ENCODE measurements at regions of chr15 and their contacts with region 1.

Region 1: DNA sequence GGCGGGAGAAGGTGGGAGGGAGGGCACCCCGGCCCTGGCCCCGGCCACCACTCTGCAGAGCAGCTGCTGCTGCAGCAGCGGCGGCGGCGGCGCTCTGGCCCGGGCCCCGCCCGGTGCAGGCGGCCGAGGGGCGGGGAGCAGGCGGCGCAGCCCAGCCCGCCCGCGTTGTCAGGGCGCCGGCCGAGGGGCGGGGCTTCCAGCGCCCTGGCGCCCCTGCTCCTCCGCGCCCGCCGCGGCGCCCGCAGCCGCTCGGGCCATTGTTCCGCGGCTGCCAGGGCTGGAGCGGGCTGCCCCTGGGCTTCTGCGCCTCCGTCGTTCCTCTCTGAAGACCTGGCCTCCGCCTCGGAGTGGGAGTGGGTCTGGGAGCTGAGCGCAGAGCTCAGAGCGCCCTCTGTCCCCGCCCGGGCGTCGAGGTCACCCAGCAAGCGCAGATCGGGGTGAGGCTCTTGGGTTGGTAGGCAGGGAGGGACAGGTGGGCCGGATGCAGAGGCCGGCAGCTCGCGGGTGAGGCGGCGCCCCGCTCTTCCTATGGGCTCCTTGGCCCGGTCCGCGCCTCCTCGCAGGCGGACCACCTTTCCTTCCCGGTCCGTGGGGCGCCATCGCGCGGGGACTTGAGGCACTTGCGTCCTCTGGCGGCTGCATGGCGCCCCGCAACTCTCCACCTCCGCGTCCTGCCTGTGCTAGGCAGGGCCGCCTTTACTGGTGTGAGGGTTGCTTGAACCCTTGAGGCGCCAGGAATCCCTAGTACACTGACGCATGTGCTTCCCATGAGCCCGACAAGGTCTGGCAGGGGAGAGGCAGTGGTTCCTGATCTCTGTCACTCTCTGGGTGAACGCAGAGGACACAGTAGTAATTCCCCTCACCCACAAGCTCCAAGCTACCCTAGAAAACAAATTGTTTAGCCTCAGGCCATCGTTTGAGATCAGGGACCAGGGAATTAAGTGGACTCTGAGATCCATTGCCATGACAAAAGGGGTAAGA is at the start of gene LPCAT4:
- DNase-seq: peak; percentile 94
- total RNA-seq, gene LPCAT4: 34.3 TPM

Region 2: DNA sequence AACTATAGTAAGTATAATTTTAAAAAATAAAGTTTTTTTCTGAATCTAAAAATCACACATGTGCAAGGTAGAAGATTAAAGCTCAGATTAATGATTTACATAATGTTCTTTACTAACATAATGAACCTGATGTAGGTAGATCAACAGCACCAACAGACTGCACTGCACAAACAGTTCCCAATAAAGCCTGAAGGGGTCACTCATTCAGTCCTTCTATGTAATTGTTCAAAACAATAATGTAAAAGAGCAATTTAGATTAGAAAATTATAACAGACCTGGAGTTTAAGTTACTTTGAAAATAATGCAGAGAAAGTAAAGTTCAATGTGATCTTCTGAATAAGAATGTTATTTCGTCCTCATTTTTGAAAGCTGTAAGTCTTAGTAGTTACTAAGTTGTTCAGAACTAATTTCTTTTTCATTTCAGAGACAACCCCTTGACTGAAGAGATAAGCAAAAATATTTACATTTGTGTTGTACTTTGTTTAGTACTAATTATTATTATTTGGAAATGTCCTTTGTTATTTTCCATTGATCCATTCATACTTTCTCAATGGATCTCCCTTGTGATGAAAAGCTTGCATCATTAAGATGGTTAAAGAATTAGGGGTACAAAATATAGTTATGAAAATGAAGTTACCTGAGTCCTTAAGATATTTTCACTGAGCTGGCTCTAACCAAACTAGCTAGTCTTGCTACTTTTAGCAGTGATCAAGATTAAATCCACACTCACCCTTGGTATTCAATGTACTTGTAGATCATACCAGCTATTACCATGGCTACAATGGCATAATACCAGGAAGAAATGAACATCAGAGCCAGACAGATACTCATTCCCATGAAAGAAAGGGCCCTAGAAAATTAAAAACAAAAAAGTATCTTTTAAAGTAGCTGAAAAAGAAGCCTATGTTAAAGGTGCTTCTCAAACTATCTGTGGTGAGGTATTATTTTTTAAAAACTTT is 125.7 kb before region 1 on chr15:
- intact Hi-C with region 1: loop called (anchors 5 kb)
- DNase-seq: no peak

Region 3: DNA sequence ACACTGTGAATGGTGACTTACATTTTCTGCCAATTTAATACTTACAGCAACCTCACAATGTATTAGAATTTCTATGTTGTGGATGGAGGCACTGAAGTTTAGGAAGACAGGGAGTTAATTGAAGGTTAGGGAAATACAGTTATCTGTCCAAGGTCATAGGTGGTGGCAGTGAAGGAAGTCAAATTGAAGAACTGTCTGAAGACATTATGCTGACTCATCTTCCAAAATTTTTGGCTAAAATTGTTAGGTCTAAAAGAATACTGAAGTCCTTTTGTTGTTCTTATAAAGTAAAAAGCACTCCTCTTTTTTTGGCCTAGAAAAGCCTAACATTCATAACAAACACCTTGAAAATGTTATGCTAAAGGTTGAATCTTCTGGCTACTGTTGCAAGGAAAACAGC is 114.8 kb before region 1 on chr15:
- intact Hi-C with region 1: no loop called
- DNase-seq: no peak

Region 4: GRCh38 chr15:34342737-34343575 is 24.4 kb before region 1 on chr15 and contains the starts of genes NOP10 and NUTM1:
- intact Hi-C with region 1: loop called (anchors 1 kb)
- DNase-seq: peak; percentile 97
- total RNA-seq, gene NOP10: 96.9 TPM
- total RNA-seq, gene NUTM1: not detected

Region 5: DNA sequence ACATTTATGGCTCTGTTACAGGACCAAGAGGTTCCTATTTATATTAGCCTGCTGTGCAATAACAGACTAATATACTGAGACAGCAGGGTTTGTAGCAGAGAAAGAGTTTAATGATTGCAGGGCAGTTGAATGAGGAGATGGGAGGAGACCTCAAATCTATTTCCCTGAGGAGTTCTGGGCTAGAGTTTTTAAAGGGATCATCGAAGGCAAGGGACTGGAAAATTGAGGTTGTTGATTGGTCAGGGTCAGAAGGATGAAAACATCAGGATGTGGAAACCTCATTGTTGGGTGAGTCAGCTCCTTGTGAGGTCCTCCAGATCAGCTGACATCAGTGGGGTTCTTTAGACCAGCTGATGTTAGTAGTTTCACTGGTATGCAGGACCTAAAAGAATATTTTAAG is 276.7 kb after region 1 on chr15:
- intact Hi-C with region 1: no loop called
- DNase-seq: no peak

Measured in cardiac septum (tissue), 1 donor.